ENCODE measurements at regions of chr6 and their contacts with region 1.

Region 1: DNA sequence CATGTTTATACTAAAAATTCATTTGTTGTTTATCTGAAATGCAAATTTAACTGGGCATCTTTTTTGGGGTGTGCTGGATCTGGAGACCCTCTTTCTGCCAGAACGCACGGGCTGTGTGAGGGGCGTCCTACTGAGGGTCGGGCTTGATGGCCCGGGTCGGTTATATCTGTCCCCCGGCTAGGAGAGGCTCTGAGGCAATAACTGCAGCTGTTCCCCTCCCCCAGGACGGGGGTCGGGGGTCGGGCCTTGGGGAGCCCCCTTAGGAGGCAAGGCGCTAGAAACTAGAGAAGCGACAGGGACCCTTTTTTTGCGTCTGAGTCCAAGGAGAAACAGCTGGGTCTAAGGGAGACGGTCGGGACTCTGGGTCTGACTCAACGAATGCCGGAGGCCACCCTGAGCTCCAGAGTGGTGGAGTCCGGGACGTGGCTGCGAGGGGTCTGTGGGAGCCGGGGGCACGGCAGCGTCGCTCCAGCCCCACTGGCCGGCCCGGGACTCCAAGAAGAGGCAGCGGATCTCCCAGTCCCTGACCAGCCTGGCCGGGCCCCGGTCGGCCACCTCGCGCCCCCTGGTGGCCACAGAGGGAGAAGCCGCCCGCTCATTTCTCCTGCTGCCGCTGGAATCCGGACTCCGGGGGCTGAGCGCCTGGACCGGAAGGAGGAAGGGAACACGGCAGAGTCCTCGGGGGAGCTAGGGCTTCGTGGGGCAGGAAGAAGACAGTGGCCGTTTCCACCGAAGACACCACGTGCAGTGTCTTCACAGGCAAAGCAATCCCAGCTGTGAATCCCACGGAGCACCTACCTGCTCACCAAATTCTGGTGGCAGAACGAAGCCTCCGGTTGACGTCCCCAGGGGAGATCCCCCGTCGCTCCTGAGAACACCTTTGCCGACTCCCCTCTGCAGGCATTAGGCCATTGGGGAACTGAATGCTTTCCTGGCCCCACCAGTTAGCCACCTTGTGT is 24.0 kb upstream of the SCML4 start:
- DNase-seq: peak; percentile 51
- H3K4me3 ChIP-seq: peak overlapping the region; percentile 68
- H3K27ac ChIP-seq: no peak overlapping the region
- H3K27me3 ChIP-seq: peaks cover 8% of the 10 kb centered on the region
- CTCF ChIP-seq: peak; percentile 91

Region 2: GRCh38 chr6:107318100-107318736 is 529.9 kb before region 1 on chr6:
- CTCF ChIA-PET with region 1: interaction called, 25 read pairs
- POLR2A ChIA-PET with region 1: no interaction called
- DNase-seq: peak; percentile 32
- H3K4me3 ChIP-seq: no peak overlapping the region
- H3K27ac ChIP-seq: no peak overlapping the region
- H3K27me3 ChIP-seq: no peaks in the 10 kb centered on the region
- CTCF ChIP-seq: peak; percentile 91

Region 3: GRCh38 chr6:107674995-107675738 is 173.0 kb before region 1 on chr6:
- CTCF ChIA-PET with region 1: interaction called, 80 read pairs
- POLR2A ChIA-PET with region 1: no interaction called
- DNase-seq: peak; percentile 76
- H3K4me3 ChIP-seq: no peak overlapping the region
- H3K27ac ChIP-seq: no peak overlapping the region
- H3K27me3 ChIP-seq: no peaks in the 10 kb centered on the region
- CTCF ChIP-seq: peak; percentile 93

Region 4: GRCh38 chr6:107832151-107833056 is 15.7 kb before region 1 on chr6:
- CTCF ChIA-PET with region 1: interaction called, 11 read pairs
- POLR2A ChIA-PET with region 1: no interaction called
- DNase-seq: no peak
- H3K4me3 ChIP-seq: no peak overlapping the region
- H3K27ac ChIP-seq: no peak overlapping the region
- H3K27me3 ChIP-seq: peaks cover 9% of the 10 kb centered on the region
- CTCF ChIP-seq: no peak

Region 5: DNA sequence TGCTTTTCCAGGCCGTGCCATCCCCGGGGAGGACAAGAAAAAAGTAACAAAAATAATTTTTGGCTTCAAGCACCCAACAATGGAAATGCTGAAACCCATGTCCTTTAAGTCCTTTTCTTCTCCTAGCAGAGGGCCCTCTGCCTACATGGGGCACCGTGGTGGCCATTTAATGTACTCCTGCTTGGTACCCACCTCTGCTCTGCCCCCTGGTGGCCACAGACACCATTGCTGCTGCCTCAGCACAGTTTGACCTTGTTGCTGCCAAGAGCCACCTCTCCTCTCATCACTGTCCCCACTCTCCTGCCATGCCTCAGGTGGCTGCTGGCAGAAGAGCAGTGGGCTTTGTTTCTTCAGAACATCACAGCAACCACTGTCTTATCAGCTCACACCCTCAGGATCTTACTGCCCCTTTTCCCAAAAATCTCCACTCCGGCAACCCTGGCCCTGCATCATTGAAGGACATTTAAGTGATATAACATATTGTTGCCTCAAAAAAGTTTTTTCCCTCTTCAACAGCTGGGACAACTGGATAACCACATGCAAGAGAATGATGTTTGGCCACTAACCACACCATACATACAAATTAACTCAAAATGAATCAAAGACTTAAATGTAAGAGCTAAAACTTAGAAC is 987.2 kb after region 1 on chr6:
- CTCF ChIA-PET with region 1: interaction called, 10 read pairs
- POLR2A ChIA-PET with region 1: no interaction called
- DNase-seq: peak; percentile 36
- H3K4me3 ChIP-seq: no peak overlapping the region
- H3K27ac ChIP-seq: no peak overlapping the region
- H3K27me3 ChIP-seq: no peaks in the 10 kb centered on the region
- CTCF ChIP-seq: peak; percentile 84

Measured in AG04450 (cell line).